Motor neuron (in vitro differentiated cells): ENCODE measurements at regions of chr12 and their contacts with region 1.

Region 1: DNA sequence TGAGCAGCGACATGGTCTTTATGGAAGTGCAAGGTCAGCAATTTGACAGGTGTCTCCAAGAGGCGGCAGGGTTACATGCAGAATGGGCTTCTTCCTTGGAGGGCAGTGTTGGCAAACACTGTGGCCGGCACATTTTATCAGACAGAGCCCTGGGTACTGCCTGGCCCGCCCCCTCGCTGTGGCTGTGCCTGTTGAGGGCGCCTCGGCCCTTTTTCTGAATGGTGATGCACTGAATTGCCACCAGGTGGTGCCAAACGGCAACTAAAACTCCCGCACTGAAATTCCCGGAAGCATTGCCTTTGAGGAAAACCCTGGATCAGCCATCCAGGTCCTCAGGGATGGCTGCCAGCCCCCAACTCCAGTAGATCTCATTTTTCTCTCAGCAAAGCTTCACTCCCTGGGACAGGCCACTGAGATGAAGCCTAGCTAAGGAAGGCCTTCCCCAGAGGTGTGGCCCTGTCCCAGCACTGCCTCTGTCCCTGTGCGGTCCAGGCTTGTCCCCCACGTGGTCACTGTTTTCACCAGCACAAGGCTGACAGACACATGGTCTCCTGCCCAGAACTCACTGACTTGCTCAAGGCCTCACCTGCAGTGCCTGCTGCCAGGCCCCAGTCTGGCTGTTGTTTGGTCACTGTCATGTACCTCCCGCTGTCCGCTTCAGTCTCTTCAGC is 73.6 kb downstream of the TESC start:
- ATAC-seq: peak; percentile 82 to 95 (median 85)
- H3K4me3 ChIP-seq: no peak overlapping the region
- H3K27ac ChIP-seq: no peak overlapping the region
- H3K4me1 ChIP-seq: peaks cover 2 to 3% of the 10 kb centered on the region in 2 donors

Region 2: DNA sequence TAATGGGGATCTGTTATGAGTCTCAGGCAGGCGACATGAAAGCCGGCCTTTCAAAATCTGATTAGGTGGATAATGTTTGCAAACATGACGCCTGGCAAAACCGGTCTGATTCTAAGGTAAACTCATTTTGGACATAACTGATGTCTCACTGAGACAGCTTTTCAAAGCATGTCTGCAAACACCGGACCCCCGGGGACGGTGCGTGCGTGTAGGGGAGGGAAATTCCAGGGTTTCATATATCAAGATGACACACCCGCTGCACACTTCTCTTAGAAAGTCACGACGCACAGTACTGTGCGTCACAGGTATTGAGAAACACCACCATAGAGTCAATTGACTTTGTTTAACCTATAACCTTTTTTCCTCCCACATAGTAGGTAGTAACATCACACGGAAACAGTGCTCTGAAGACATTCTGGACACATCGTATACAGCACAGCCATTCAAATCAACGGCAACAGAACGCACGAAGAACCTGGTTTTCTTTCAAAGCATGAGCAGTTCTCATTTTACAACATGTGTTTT is 117.5 kb after region 1 on chr12:
- in situ Hi-C with region 1: loop called in 1 of 9 experiments (anchors 25 kb)
- ATAC-seq: peak in 5 of 8 experiments; percentile 74 to 87 (median 83)
- H3K4me3 ChIP-seq: no peak overlapping the region
- H3K27ac ChIP-seq: no peak overlapping the region
- H3K4me1 ChIP-seq: no peaks in the 10 kb centered on the region

Region 3: GRCh38 chr12:117155278-117156060 is 129.9 kb after region 1 on chr12:
- in situ Hi-C with region 1: loop called in 2 of 9 experiments (anchors 10 to 25 kb)
- ATAC-seq: peak; percentile 34 to 88 (median 75)
- H3K4me3 ChIP-seq: no peak overlapping the region
- H3K27ac ChIP-seq: no peak overlapping the region
- H3K4me1 ChIP-seq: peaks cover 0 to 5% of the 10 kb centered on the region in 2 donors